PC-3 (cell line): ENCODE measurements at regions of chr14 and their contacts with region 1.

Region 1: DNA sequence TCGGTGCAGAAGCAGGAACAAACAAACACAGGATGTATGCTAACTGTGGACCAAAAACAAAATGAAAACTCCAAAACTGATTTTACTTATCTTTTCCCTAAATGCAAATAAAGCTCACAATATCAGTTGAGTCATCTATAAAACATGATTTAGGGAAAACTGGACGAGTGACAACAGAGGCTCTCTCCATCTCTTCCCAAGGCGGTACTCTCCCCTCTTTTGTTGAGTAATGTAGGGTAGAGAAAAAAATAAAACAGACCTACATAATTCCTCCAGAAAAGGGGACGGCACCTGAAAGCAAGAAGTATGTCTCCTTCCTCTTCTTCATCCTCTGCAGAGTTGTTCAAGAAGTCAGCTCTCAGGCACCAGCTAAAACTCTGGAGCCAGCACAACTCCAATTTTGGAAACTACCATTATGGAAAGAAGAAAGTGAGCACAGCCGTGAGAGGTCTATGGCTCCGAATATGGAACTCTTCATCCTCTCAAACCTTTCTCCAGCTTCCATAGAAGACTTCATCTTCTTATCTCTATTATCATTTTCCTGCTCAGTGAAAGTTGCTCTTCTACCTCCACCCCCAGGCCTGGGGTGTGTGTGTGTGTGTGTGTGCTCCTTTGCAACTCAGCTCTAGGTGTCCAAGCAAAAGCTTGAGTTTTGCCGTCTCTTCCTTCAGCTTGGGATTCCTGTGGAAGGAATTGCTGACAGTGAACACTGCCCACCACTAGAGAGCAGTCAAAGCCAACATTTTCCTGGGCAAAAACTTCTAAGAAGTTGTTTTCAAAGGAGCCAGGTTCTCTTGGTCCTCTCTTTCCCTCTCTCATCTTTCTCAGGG is 155.4 kb downstream of the DIO2 start:
- DNase-seq: peak; percentile 84
- ATAC-seq: peak; percentile 62
- H3K4me3 ChIP-seq: 0 out of 2 replicates have a peak overlapping the region, but pooled peaks have one; percentile 2
- H3K27ac ChIP-seq: peak overlapping the region; percentile 14; the same call in 1 of the 2 replicates
- H3K4me1 ChIP-seq: peaks cover 35% of the 10 kb centered on the region
- H3K27me3 ChIP-seq: no peaks in the 10 kb centered on the region
- CTCF ChIP-seq: peak; percentile 89

Region 2: DNA sequence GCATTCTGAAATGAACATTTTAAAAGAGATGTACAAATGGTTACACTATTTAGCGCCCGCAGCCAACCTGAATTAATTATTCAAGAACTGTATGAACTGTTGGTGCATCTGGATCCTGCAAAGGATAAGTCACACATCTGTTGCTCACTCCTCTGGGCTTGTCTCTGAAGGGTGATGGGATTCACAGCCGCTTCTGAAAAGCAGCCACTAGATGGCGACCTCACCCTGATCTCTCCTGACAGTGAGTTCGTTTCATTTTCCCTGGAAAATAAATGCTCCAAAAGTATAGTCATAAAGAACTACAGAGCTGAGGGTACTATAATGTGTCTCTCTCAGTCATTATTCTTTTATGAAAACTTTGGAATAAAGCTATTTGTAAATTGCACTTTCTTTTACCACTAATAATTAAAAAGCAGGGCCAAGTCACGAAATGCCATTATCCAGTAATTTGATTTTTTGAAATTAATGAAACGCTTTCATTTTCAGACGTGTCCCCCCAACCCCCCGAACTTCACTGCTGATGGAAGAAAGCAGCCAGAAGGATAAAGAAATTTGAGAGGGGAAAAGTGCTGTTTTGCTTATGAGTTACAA is 1096.1 kb before region 1 on chr14:
- CTCF ChIA-PET with region 1: no interaction called
- POLR2A ChIA-PET with region 1: no interaction called
- intact Hi-C with region 1: loop called (anchors 10 kb)
- DNase-seq: peak; percentile 78
- ATAC-seq: peak; percentile 88
- H3K4me3 ChIP-seq: no peak overlapping the region
- H3K27ac ChIP-seq: no peak overlapping the region
- H3K4me1 ChIP-seq: no peaks in the 10 kb centered on the region
- H3K27me3 ChIP-seq: no peaks in the 10 kb centered on the region
- CTCF ChIP-seq: peak; percentile 93

Region 3: GRCh38 chr14:79809849-79810612 is 245.9 kb before region 1 on chr14:
- CTCF ChIA-PET with region 1: interaction called, 10 read pairs
- POLR2A ChIA-PET with region 1: no interaction called
- intact Hi-C with region 1: loop called (anchors 1 kb)
- DNase-seq: peak; percentile 64
- ATAC-seq: peak; percentile 67
- H3K4me3 ChIP-seq: no peak overlapping the region
- H3K27ac ChIP-seq: no peak overlapping the region
- H3K4me1 ChIP-seq: no peaks in the 10 kb centered on the region
- H3K27me3 ChIP-seq: no peaks in the 10 kb centered on the region
- CTCF ChIP-seq: peak; percentile 71

Region 4: DNA sequence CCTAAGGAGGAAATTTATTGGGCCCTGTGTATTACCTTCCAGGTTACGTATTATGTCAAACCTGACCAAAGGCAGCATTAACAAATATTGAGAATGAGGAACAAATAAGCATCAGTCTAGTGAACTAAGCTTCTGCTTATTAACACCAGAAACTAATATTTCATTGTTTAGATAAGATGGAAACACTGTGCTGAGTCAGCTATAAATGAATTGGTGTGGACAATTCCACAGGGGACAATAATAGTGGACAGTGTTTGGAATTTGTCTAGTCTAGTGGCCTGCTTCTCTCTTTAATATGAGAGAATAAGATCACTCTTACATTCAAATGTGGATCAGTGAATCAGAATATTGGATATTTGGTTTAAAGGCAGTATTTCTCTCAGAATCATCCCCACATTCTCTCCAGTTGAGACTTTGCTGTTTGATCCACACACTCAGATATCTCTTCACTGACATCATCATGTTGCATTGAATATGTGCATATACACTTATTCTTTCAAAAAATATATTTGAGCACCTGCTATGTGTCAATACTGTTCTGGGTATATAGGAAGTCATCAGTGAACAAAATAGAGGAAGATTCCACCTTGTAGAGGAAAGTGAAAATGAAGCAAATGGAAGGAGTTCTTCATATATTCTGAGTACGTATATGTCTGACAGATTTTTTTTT is 19.2 kb after region 1 on chr14:
- CTCF ChIA-PET with region 1: no interaction called
- POLR2A ChIA-PET with region 1: no interaction called
- intact Hi-C with region 1: no loop called
- DNase-seq: no peak
- ATAC-seq: no peak
- H3K4me3 ChIP-seq: no peak overlapping the region
- H3K27ac ChIP-seq: no peak overlapping the region
- H3K4me1 ChIP-seq: no peaks in the 10 kb centered on the region
- H3K27me3 ChIP-seq: no peaks in the 10 kb centered on the region
- CTCF ChIP-seq: no peak

Region 5: GRCh38 chr14:80356413-80356812 is 300.5 kb after region 1 on chr14:
- CTCF ChIA-PET with region 1: interaction called, 4 read pairs
- POLR2A ChIA-PET with region 1: no interaction called
- intact Hi-C with region 1: loop called (anchors 2 kb)
- DNase-seq: peak; percentile 49
- ATAC-seq: peak; percentile 54; the same call in 1 of the 2 replicates
- H3K4me3 ChIP-seq: no peak overlapping the region
- H3K27ac ChIP-seq: no peak overlapping the region
- H3K4me1 ChIP-seq: no peaks in the 10 kb centered on the region
- H3K27me3 ChIP-seq: no peaks in the 10 kb centered on the region
- CTCF ChIP-seq: peak; percentile 83

Region 6: DNA sequence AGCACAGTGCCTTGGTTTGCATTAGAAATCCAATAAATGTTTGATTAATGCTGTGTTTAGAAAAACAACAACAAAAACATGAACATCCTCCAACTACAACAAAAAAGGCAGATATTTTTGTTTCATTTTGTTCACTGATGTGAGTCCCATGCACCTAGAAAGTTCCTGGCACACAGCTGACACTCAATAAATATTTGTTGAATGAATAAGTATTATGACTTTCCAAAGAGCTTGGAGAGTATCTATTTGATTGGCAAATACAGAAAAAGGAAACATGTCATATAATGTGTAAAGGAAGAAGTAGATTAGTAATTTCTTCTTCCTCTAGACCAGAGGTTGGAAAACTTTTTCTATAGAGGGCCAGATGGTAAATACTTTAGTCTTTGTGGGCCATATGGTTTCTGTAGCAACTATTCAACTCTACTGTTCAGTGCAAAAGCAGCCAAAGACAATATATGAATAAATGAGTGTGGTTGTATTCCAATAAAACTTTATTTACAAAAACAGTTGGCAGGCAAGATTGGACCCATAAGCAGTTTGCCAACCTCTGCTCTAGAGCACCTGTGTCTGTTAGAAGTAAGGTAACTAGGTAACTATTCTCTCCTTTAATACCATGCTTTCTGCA is 467.7 kb after region 1 on chr14:
- CTCF ChIA-PET with region 1: no interaction called
- POLR2A ChIA-PET with region 1: no interaction called
- intact Hi-C with region 1: loop called (anchors 2 kb)
- DNase-seq: peak; percentile 87
- ATAC-seq: peak; percentile 86
- H3K4me3 ChIP-seq: peak overlapping the region; percentile 20; the same call in 1 of the 2 replicates
- H3K27ac ChIP-seq: peak overlapping the region; percentile 76
- H3K4me1 ChIP-seq: peaks cover 29% of the 10 kb centered on the region
- H3K27me3 ChIP-seq: no peaks in the 10 kb centered on the region
- CTCF ChIP-seq: no peak

Region 7: GRCh38 chr14:80784820-80785219 is 728.9 kb after region 1 on chr14:
- CTCF ChIA-PET with region 1: no interaction called
- POLR2A ChIA-PET with region 1: no interaction called
- intact Hi-C with region 1: loop called (anchors 2 kb)
- DNase-seq: no peak
- ATAC-seq: 0 out of 2 replicates have a peak, but pooled peaks have one; percentile 15
- H3K4me3 ChIP-seq: no peak overlapping the region
- H3K27ac ChIP-seq: no peak overlapping the region
- H3K4me1 ChIP-seq: no peaks in the 10 kb centered on the region
- H3K27me3 ChIP-seq: no peaks in the 10 kb centered on the region
- CTCF ChIP-seq: no peak